OCI-LY7 (cell line): ENCODE measurements at regions of chr6 and their contacts with region 1.

Region 1: GRCh38 chr6:106223300-106223930 is 102.1 kb downstream of the ATG5 start:
- DNase-seq: peak; percentile 85
- H3K4me3 ChIP-seq: no peak overlapping the region
- H3K27ac ChIP-seq: no peak overlapping the region
- H3K4me1 ChIP-seq: no peaks in the 10 kb centered on the region
- CTCF ChIP-seq: peak; percentile 92

Region 2: GRCh38 chr6:105484238-105485161 is 738.9 kb before region 1 on chr6:
- CTCF ChIA-PET with region 1: no interaction called
- POLR2A ChIA-PET with region 1: no interaction called
- intact Hi-C with region 1: loop called (anchors 5 kb)
- DNase-seq: peak; percentile 50
- H3K4me3 ChIP-seq: no peak overlapping the region
- H3K27ac ChIP-seq: no peak overlapping the region
- H3K4me1 ChIP-seq: peaks cover 5% of the 10 kb centered on the region
- CTCF ChIP-seq: peak; percentile 98

Region 3: DNA sequence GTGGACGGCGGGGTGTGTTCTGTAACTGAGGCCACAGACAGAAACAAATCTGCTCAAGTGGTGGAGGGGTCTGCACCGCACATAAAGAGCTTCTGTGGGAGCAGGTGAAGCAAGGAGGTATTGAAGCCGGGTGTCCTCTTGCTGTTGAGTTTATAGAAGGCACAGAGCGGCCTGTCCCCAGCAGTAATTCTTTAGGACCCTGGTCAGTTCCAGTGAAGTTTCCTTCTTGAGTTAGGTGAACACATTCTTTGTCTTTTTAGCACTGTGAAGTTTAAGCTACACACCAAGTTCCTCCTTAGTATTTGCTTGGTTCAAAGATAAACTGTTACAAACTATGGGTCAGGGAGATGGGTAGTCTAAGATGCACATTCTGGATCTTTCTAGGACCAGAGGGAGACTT is 131.1 kb before region 1 on chr6:
- CTCF ChIA-PET with region 1: interaction called, 25 read pairs
- POLR2A ChIA-PET with region 1: interaction called, 22 read pairs
- intact Hi-C with region 1: loop called (anchors 1 kb)
- DNase-seq: no peak
- H3K4me3 ChIP-seq: no peak overlapping the region
- H3K27ac ChIP-seq: no peak overlapping the region
- H3K4me1 ChIP-seq: peaks cover 76% of the 10 kb centered on the region
- CTCF ChIP-seq: no peak

Region 4: DNA sequence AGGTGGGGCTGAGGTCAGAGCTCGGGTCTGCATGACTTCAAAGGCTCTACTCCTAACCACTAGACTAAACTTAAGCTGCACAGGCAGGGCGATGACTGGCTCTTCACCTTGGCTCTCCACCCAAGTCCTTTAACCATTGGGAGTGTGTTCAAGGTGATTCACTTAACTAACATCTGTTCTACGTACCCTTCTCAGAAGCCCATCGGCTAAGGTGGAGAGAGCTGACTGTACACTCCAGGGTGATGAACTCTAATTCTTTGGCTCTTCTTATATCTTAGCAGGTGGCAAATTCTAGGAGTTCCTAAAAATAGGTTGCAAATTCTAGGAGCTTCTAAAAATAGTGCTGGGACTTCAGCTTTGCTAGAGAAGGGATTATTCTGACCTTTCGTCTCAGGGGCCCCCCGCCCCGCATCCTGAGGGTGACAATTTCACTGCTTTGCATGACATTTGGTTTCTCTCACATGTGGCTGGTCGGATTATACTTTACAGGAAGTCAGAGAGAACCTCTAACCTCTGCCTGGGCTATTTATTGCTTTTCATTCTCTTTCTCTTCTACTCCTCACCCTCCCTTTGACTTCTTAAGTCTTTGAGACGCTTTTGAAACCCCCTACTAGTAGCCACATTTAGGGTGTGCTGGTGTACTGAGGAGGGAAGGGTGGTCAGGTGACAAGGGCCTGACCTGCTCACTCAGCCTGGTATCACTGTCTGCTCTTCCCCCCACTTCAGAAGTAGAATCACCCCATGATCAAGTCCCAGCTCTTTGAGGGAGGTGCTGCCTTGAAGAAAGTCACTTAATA is 81.8 kb before region 1 on chr6:
- CTCF ChIA-PET with region 1: interaction called, 6 read pairs
- POLR2A ChIA-PET with region 1: interaction called, 5 read pairs
- intact Hi-C with region 1: loop called (anchors 1 kb)
- DNase-seq: peak; percentile 73
- H3K4me3 ChIP-seq: peak overlapping the region; percentile 11
- H3K27ac ChIP-seq: peak overlapping the region; percentile 85
- H3K4me1 ChIP-seq: peaks cover 51% of the 10 kb centered on the region
- CTCF ChIP-seq: no peak

Region 5: GRCh38 chr6:106300944-106301343 is 77.5 kb after region 1 on chr6:
- CTCF ChIA-PET with region 1: no interaction called
- POLR2A ChIA-PET with region 1: no interaction called
- intact Hi-C with region 1: loop called (anchors 5 kb)
- DNase-seq: peak; percentile 41
- H3K4me3 ChIP-seq: no peak overlapping the region
- H3K27ac ChIP-seq: no peak overlapping the region
- H3K4me1 ChIP-seq: no peaks in the 10 kb centered on the region
- CTCF ChIP-seq: peak; percentile 82